Ascending aorta (tissue), 2 donors: ENCODE measurements at regions of chrX and their contacts with region 1.

Region 1: GRCh38 chrX:40153335-40154249 is 55.8 kb upstream of the BCOR start:
- DNase-seq: no peak
- H3K4me3 ChIP-seq: peak overlapping the region; percentile 56 to 62
- H3K27ac ChIP-seq: peak overlapping the region; percentile 63 to 67
- H3K4me1 ChIP-seq: peaks cover 9 to 10% of the 10 kb centered on the region in 2 donors
- H3K27me3 ChIP-seq: peaks cover 8% of the 10 kb centered on the region
- CTCF ChIP-seq: no peak

Region 2: GRCh38 chrX:39730662-39731397 is 422.8 kb before region 1 on chrX:
- intact Hi-C with region 1: loop called (anchors 5 kb)
- DNase-seq: peak; percentile 50 to 90
- H3K4me3 ChIP-seq: no peak overlapping the region
- H3K27ac ChIP-seq: peak overlapping the region; percentile 45 to 69
- H3K4me1 ChIP-seq: peaks cover 5 to 12% of the 10 kb centered on the region in 2 donors
- H3K27me3 ChIP-seq: no peaks in the 10 kb centered on the region
- CTCF ChIP-seq: peak; percentile 27 to 68 (median 56)

Region 3: DNA sequence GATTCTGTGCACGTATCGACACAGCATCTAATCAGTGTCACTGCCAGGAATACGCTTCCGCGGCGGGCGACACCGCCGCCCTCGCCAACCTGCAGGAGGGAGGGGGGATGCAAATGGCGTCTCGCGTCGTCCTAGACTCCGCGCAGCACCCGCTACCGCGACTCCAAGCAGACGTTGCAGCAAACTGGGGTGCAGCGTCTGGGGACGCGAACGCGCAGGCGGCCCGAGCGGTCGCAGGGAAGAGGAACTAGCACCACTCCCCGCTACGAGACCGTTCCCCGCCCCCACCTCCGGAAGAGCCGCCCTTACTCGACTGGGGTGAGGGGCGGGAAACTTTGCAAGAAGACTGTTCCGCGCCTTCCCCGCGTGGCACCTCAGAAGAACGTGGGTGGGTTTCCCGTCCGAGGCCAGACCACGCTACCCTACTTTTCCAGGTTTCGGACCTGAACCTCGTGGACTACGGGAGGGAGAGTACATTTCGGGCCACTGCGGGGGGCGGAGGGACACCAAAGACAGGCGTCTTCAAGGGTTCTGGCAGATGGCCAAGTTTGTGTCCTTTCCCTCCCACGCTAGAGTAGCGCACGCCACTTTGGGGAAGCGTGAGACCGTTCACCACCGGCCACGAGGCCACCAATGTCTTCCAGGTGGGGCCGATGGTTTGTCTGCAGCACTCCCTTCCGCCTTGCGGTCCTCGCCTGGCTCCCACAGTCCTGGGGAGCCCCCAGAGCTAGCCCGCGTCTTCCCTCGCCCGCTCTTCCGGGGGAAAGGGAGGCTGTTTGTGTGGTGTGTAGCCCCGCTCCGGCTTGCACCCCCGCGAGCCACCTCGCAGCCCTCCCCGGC is 22.1 kb after region 1 on chrX:
- intact Hi-C with region 1: loop called (anchors 2 kb)
- DNase-seq: peak in 1 of 2 donors; percentile 86
- H3K4me3 ChIP-seq: peak overlapping the region; percentile 59 to 75
- H3K27ac ChIP-seq: peak overlapping the region; percentile 89 to 93
- H3K4me1 ChIP-seq: peaks cover 3 to 14% of the 10 kb centered on the region in 2 donors
- H3K27me3 ChIP-seq: no peaks in the 10 kb centered on the region
- CTCF ChIP-seq: no peak

Region 4: DNA sequence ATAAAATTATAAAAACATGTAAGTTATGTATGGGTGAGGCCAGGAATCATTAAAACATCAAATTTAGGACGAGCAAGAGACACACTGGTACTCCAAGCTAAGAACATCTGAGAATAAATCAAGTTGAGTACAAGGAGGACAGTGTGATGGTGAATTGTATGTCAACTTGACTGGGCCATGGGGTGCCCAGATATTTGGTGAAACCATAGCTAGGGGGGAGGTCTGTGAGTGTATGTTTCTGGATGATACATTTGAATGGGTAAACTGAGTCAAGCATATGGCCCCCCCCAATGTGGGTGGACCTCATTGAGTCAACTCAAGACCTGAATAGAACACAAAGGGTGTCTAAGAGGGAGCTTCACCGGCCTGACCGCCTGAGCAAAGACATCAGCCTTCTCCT is 59.5 kb after region 1 on chrX:
- intact Hi-C with region 1: no loop called
- DNase-seq: no peak
- H3K4me3 ChIP-seq: no peak overlapping the region
- H3K27ac ChIP-seq: no peak overlapping the region
- H3K4me1 ChIP-seq: no peaks in the 10 kb centered on the region
- H3K27me3 ChIP-seq: no peaks in the 10 kb centered on the region
- CTCF ChIP-seq: no peak